MCF 10A (cell line): ENCODE measurements at regions of chr20 and their contacts with region 1.

Region 1: GRCh38 chr20:25017257-25018115 is 24.9 kb upstream of the APMAP start:
- DNase-seq: peak; percentile 87
- H3K4me3 Mint-ChIP-seq: no peak overlapping the region
- H3K27ac Mint-ChIP-seq: peak overlapping the region; percentile 27
- H3K4me1 Mint-ChIP-seq: peaks cover 15% of the 10 kb centered on the region
- H3K27me3 Mint-ChIP-seq: no peaks in the 10 kb centered on the region
- CTCF ChIP-seq: no peak

Region 2: GRCh38 chr20:24522452-24523330 is 494.8 kb before region 1 on chr20:
- CTCF ChIA-PET with region 1: no interaction called
- POLR2A ChIA-PET with region 1: no interaction called
- intact Hi-C with region 1: no loop called
- DNase-seq: no peak
- H3K4me3 Mint-ChIP-seq: no peak overlapping the region
- H3K27ac Mint-ChIP-seq: no peak overlapping the region
- H3K4me1 Mint-ChIP-seq: no peaks in the 10 kb centered on the region
- H3K27me3 Mint-ChIP-seq: no peaks in the 10 kb centered on the region
- CTCF ChIP-seq: no peak

Region 3: DNA sequence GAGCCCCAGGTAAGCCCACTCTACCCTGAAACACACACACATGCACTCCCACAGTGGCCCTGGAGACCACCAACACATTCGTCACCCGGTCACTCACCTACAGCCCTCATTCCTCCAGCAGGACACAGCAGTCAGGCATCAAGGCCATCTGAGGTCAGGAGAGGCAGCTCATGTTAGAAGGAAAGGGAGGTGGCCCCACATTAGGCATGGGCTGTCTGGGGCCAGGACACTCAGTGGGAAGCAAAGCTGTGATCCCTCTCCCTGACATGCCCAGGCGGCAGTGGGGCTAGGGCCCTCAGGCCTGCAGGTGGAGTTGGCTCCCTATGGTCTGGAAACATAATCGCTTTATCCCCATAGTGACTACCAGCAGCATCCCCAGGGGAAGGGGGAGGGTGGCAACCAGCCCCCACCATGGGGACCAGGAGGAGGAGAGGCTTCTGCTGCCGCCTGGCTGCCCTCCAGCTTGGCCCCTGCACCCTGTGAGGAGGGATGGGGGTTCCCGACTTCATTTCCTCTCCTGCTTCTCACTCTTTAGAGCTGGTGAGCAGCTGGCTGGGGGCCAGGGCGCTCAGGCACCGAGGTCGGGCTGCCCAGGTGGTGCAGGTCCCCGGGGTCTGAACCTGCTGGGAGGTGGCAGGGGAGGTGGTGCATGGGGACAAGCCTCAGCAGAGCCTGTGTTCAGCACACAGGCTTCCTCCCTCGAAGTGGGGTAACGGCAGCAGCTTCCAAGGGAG is 145.0 kb before region 1 on chr20:
- CTCF ChIA-PET with region 1: no interaction called
- POLR2A ChIA-PET with region 1: no interaction called
- intact Hi-C with region 1: no loop called
- DNase-seq: no peak
- H3K4me3 Mint-ChIP-seq: no peak overlapping the region
- H3K27ac Mint-ChIP-seq: no peak overlapping the region
- H3K4me1 Mint-ChIP-seq: no peaks in the 10 kb centered on the region
- H3K27me3 Mint-ChIP-seq: no peaks in the 10 kb centered on the region
- CTCF ChIP-seq: no peak

Region 4: GRCh38 chr20:25000268-25000821 is 17.1 kb before region 1 on chr20:
- CTCF ChIA-PET with region 1: interaction called, 19 read pairs
- POLR2A ChIA-PET with region 1: interaction called, 14 read pairs
- intact Hi-C with region 1: no loop called
- DNase-seq: peak; percentile 73
- H3K4me3 Mint-ChIP-seq: no peak overlapping the region
- H3K27ac Mint-ChIP-seq: peak overlapping the region; percentile 84
- H3K4me1 Mint-ChIP-seq: peaks cover 38% of the 10 kb centered on the region
- H3K27me3 Mint-ChIP-seq: peaks cover 12% of the 10 kb centered on the region
- CTCF ChIP-seq: no peak

Region 5: DNA sequence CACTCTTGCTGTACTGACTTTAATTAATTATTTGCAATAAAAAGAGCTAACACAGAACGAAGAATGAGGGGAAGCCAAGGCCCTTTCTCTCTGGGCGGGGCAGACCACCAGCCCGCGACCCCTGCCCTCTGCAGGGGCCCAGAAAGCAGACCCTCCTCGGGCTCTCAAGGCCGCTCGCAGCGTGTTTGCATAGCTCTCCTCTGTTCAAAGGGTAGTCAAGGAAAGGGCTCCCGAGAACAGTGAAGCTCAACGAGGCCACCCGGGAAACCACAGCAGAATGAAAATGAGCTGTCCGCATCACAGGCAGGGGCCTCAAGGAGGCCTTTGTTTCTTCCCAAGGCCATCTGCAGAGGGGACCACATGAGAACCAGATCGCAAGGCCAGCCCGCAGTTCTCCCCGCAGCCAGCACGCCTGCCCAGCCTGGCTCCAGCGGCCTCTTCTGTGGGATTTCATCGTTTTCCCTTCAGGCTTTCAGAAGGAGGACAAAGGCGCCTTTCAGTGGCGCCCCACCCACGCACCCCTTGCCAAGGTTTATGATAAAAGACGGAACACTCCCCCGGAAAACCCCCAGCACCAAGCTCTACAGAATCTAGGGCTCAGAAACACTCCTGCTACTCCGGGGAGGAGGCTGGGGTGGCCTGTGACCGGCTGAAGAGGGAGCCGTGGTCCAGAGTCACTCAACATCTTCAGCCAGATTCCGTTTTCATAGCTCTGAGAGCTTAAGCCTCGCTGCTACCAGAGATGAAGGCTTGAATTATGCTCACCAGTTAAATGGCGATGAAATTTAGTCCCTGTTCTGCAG is 15.2 kb after region 1 on chr20:
- CTCF ChIA-PET with region 1: interaction called, 30 read pairs
- POLR2A ChIA-PET with region 1: interaction called, 42 read pairs
- intact Hi-C with region 1: no loop called
- DNase-seq: no peak
- H3K4me3 Mint-ChIP-seq: no peak overlapping the region
- H3K27ac Mint-ChIP-seq: no peak overlapping the region
- H3K4me1 Mint-ChIP-seq: peaks cover 16% of the 10 kb centered on the region
- H3K27me3 Mint-ChIP-seq: no peaks in the 10 kb centered on the region
- CTCF ChIP-seq: no peak

Region 6: GRCh38 chr20:25039396-25040115 is 22.1 kb after region 1 on chr20:
- CTCF ChIA-PET with region 1: interaction called, 30 read pairs
- POLR2A ChIA-PET with region 1: interaction called, 42 read pairs
- intact Hi-C with region 1: no loop called
- DNase-seq: peak; percentile 90
- H3K4me3 Mint-ChIP-seq: peak overlapping the region; percentile 25
- H3K27ac Mint-ChIP-seq: peak overlapping the region; percentile 81
- H3K4me1 Mint-ChIP-seq: peaks cover 20% of the 10 kb centered on the region
- H3K27me3 Mint-ChIP-seq: peaks cover 11% of the 10 kb centered on the region
- CTCF ChIP-seq: no peak